BJ (cell line): ENCODE measurements at regions of chr22 and their contacts with region 1.

Region 1: DNA sequence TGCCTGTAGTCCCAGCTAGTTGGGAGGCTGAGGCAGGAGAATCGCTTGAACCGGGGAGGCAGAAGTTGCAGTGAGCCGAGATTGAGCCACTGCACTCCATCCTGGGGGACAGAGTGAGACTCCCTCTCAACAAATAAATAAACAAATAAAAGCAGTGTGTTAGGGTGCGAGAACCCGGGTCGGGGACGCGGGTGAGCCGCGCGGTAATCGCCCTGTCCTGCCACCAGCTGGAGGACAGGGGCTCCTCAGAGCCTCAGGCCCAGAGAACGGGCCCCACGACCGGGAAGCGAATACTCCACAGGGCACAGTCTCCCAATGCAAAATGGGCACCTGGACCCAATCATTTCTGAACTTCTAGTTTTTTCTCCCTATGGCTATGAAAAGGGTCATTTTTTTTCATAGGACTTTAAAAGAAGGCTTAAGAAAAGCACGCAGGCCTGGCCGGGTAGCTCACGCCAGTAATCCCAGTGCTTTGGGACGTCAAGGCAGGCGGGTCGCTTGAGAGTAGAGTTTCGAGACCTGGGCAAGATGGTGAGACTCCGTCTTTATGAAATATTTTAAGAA is 744 bp upstream of the MCM5 start:
- DNase-seq: no peak
- H3K4me3 ChIP-seq: peak overlapping the region; percentile 91
- H3K27me3 ChIP-seq: no peaks in the 10 kb centered on the region
- CTCF ChIP-seq: no peak

Region 2: GRCh38 chr22:35367301-35367886 is 31.8 kb before region 1 on chr22:
- CTCF ChIA-PET with region 1: interaction called, 4 read pairs
- POLR2A ChIA-PET with region 1: interaction called, 12 read pairs
- DNase-seq: no peak
- H3K4me3 ChIP-seq: no peak overlapping the region
- H3K27me3 ChIP-seq: no peaks in the 10 kb centered on the region
- CTCF ChIP-seq: no peak

Region 3: DNA sequence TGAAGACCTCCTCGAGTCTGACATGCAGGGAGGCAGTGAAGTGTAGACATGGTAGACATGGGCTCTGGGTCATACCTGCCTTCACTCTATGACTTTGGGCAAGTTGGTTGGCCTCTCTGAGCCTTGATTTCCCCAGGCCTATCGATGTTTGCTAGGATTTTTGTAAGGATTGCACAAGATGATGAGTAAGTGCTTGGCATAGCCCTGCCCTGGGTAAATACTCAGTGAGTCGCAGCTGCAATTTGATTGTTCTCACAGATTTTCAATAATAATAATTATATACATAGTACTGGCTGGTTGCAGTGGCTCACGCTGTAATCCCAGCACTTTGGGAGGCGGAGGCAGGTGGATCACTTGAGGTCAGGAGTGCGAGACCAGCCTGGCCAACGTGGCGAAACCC is 18.9 kb after region 1 on chr22:
- CTCF ChIA-PET with region 1: no interaction called
- POLR2A ChIA-PET with region 1: no interaction called
- DNase-seq: no peak
- H3K4me3 ChIP-seq: no peak overlapping the region
- H3K27me3 ChIP-seq: no peaks in the 10 kb centered on the region
- CTCF ChIP-seq: no peak

Region 4: DNA sequence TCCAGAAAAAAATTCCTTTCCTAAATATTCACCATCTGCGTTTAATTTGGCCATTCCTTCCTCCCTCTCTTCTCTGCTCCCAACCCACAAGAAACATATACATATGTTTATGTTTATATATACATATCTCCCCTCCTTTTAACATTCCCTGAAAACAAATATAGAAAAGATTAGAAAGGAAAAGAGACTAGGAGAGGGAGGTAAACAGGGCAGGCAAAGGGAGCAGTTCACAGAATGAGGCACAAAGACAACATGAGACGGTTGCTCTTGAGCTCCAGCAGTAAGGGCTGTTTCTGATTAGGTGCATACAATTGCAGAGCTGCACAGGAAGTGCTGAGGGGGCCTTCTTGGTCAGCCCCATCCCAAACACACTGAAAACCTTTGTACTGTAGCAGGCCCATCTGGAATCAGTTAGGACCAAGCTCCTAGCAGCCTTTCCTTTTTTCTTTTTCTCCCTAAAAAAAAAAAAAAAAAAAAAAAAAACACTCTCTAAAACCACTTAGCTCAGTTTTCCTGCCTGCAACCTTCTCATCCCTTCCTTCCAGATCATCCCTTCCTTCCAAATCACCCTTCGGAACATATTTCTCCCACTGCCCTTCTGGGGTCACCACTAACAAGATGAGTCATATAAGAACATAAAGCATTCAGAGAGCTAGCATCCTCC is 572.4 kb after region 1 on chr22:
- CTCF ChIA-PET with region 1: no interaction called
- POLR2A ChIA-PET with region 1: no interaction called
- DNase-seq: peak; percentile 91
- H3K4me3 ChIP-seq: peak overlapping the region; percentile 13; the same call in 1 of the 2 replicates
- H3K27me3 ChIP-seq: no peaks in the 10 kb centered on the region
- CTCF ChIP-seq: no peak